AG04449 (cell line): ENCODE measurements at regions of chr11 and their contacts with region 1.

Region 1: GRCh38 chr11:57493507-57494503 is 21.7 kb downstream of the SLC43A1 start:
- DNase-seq: no peak
- H3K4me3 ChIP-seq: no peak overlapping the region
- CTCF ChIP-seq: peak; percentile 89

Region 2: GRCh38 chr11:56885177-56885576 is 608.6 kb before region 1 on chr11:
- CTCF ChIA-PET with region 1: no interaction called
- POLR2A ChIA-PET with region 1: no interaction called
- DNase-seq: no peak
- H3K4me3 ChIP-seq: no peak overlapping the region
- CTCF ChIP-seq: no peak

Region 3: GRCh38 chr11:57474017-57474802 is 19.6 kb before region 1 on chr11:
- CTCF ChIA-PET with region 1: interaction called, 191 read pairs
- POLR2A ChIA-PET with region 1: interaction called, 3 read pairs
- DNase-seq: no peak
- H3K4me3 ChIP-seq: no peak overlapping the region
- CTCF ChIP-seq: no peak

Region 4: DNA sequence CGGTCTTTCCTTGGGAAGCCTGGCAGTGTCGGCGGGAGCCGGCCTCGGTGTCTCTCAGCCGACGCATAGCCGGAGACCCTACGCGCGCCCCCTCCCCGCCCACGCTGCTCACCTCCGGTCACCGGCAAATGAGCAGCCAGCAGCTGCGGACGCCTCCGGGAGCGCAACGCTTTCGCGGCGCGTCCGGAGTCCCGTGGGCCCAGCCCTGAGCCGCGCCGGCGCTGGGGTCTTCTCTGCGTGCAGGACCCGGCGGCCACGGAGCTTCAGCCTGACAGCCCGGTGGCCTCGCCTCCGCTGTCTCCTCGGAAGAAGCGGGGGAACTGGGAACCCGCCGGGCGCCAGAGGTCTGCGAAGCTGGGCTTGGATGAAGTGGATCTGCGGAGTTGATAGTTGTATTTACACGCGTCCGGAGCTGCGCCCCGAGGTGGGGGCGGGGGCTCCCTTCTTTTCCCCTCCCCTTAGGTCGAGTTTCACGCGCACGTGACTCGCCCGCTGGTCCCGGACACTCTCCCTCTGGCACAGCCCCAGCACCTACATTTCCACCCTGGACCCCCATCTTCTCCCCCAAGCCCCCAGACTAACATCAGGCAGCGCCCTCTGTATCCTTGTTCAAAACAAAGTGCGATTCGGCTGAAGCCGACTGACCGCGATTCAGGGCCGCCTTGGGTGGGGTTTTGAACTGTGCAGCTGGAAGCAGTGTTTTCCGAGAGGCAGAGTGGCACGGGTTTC is 21.7 kb after region 1 on chr11 and contains the start of gene SLC43A1:
- CTCF ChIA-PET with region 1: interaction called, 421 read pairs
- POLR2A ChIA-PET with region 1: interaction called, 5 read pairs
- DNase-seq: no peak
- H3K4me3 ChIP-seq: peak within 1 kb of the TSS; percentile 85
- CTCF ChIP-seq: peak; percentile 0